ENCODE measurements at regions of chr16 and their contacts with region 1.

Region 1: GRCh38 chr16:68902008-68902968 is 59.0 kb downstream of the TANGO6 start:
- DNase-seq: peak; percentile 48
- ATAC-seq: peak; percentile 71
- H3K4me3 ChIP-seq: no peak overlapping the region
- H3K27ac ChIP-seq: no peak overlapping the region
- H3K4me1 ChIP-seq: no peaks in the 10 kb centered on the region
- H3K27me3 ChIP-seq: no peaks in the 10 kb centered on the region
- CTCF ChIP-seq: peak; percentile 70

Region 2: GRCh38 chr16:68535331-68535730 is 367.0 kb before region 1 on chr16:
- CTCF ChIA-PET with region 1: interaction called, 3 read pairs
- POLR2A ChIA-PET with region 1: interaction called, 11 read pairs
- in situ Hi-C with region 1: no loop called
- intact Hi-C with region 1: no loop called
- DNase-seq: no peak
- ATAC-seq: no peak
- H3K4me3 ChIP-seq: no peak overlapping the region
- H3K27ac ChIP-seq: no peak overlapping the region
- H3K4me1 ChIP-seq: no peaks in the 10 kb centered on the region; the same call in 1 of the 2 replicates
- H3K27me3 ChIP-seq: no peaks in the 10 kb centered on the region
- CTCF ChIP-seq: no peak

Region 3: DNA sequence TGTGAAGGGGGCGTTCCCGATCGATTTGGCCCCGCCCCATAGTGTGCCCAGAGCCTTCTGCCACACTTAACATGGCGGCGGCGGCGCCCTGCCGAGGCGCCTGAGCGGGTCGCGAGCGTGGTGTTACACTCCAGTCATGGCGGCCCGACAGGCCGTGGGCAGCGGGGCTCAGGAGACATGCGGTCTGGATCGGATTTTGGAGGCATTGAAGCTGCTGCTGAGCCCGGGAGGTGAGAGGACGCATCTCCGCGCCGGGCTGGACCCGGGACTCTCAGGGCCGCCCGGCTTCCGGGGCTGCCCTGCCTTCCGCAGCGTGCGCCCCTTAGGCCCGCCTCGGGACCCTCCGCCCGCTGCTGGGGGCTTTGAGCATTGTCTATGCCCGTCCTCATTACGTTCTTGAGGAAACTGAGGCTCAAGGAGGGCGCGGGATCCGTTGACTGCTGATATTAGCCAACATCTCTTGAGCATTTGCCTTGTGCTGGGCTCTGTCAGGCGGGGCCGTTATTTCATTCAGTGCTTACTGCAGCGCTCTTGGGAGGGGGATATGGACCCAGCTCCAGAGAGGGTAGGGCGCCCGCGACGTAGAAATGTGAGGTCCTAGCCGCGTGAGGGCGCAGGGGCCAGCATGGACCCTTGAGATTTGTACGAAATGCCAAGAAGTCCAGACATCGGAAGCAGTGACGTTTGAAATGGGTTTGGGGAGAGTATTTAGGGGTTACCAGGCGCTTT is 58.6 kb before region 1 on chr16 and contains the start of gene TANGO6:
- CTCF ChIA-PET with region 1: interaction called, 17 read pairs
- POLR2A ChIA-PET with region 1: interaction called, 6 read pairs
- in situ Hi-C with region 1: no loop called
- intact Hi-C with region 1: no loop called
- DNase-seq: peak; percentile 12
- ATAC-seq: peak; percentile 97
- H3K4me3 ChIP-seq: peak within 1 kb of the TSS; percentile 83 to 87
- H3K27ac ChIP-seq: peak within 1 kb of the TSS; percentile 90
- H3K4me1 ChIP-seq: peaks cover 4% of the 10 kb centered on the region
- H3K27me3 ChIP-seq: no peaks in the 10 kb centered on the region
- CTCF ChIP-seq: no peak; the same call in 1 of the 2 replicates
- total RNA-seq, gene TANGO6: 11.0 TPM

Region 4: DNA sequence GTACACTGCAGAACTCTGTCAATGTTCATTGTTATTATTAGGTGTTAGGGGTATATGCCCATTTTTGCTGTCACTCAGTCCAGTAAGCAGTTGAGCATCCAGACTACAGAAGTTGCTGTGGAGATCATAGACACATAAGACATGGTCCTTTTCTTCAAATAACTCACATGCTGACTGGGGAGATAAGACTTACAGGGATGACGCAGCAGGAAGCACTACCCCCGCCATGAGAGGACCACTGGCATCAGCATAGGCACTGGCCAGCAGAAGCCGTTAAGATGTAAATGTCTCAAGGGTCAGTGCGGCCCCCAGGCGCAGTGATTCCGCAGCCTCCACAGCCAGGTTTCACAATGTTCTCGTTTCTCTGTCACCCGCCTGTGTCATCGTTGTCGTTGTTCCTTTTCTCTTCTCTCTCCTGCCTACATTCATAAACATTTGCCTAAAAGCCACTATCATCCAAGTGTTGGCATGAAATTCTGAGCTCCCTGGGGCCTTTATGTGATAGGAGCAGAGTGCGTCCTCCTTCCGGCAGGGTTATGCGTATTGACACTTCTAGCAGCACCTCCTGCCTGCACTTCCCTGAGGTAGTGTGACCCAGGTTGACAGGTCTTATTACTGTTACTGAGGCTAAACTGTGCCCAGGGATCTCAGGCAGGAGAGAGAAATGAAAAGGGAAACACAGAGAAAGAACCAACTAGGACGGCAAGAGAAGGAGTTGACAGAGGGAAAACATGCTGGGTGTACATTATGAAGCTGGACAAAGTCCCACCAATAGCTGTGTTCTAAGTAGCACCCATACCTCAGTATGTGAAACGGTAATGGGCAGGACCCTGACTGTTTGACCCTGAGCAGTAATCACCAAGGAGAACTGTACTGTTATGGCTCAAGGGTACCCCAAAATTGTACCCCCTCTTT is 41.1 kb before region 1 on chr16:
- CTCF ChIA-PET with region 1: no interaction called
- POLR2A ChIA-PET with region 1: no interaction called
- in situ Hi-C with region 1: no loop called
- intact Hi-C with region 1: no loop called
- DNase-seq: no peak
- ATAC-seq: no peak
- H3K4me3 ChIP-seq: no peak overlapping the region
- H3K27ac ChIP-seq: no peak overlapping the region
- H3K4me1 ChIP-seq: no peaks in the 10 kb centered on the region
- H3K27me3 ChIP-seq: no peaks in the 10 kb centered on the region
- CTCF ChIP-seq: no peak

Region 5: DNA sequence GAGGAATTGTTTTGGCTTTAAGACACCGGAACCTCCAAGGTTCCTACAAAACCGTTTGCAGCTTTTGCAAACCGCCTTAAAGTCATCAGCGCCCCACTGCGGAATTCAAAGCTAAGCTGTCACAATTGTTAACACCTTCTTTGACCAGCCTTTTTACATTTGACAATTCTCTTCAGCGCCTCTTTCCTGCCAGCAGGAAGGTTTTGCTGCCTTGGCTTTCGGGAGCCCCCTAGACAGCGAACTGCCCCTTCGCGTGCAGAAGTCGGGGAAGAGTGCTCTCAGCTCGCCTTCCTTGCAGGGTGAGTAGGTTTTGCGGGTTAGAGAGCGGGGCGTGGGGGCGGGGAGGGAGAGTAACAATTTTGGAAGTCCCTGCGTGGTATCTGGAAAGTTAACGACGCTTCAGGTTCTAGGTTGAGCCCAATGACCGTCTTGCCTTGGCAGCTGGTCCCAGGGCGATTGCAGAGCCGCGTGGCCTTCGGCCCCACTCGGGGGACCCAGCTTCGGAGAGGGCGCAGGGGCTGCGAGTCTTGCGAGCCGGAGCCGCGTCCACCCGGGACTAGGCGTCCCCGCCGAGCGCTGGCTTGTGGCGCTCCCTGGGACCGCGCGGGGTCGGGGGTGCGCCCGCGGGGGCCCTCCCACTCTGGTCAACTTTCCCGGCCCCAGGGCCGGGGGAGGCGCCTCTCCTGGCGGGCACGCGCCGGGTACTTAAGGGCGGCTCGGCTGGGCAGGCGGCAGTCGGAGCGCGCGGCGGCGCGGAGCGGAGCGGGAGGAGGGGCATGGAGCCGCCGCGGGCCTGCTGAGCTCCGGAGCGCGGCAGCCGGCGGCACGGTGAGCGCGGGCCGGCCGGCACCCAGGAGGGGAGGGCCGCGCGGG is 203.4 kb after region 1 on chr16 and contains the start of gene HAS3:
- CTCF ChIA-PET with region 1: no interaction called
- POLR2A ChIA-PET with region 1: no interaction called
- in situ Hi-C with region 1: no loop called
- intact Hi-C with region 1: loop called (anchors 5 kb)
- DNase-seq: peak; percentile 42
- ATAC-seq: peak; percentile 85
- H3K4me3 ChIP-seq: peak within 1 kb of the TSS; percentile 58 to 64
- H3K27ac ChIP-seq: 0 out of 2 replicates have a peak within 1 kb of the TSS, but pooled peaks have one; percentile 39
- H3K4me1 ChIP-seq: peaks cover 17% of the 10 kb centered on the region
- H3K27me3 ChIP-seq: no peaks in the 10 kb centered on the region
- CTCF ChIP-seq: peak; percentile 72; the same call in 1 of the 2 replicates
- total RNA-seq, gene HAS3: 6.9 TPM

Region 6: GRCh38 chr16:69171325-69172084 is 269.2 kb after region 1 on chr16:
- CTCF ChIA-PET with region 1: interaction called, 11 read pairs
- POLR2A ChIA-PET with region 1: no interaction called
- in situ Hi-C with region 1: no loop called
- intact Hi-C with region 1: no loop called
- DNase-seq: no peak
- ATAC-seq: no peak
- H3K4me3 ChIP-seq: no peak overlapping the region
- H3K27ac ChIP-seq: no peak overlapping the region
- H3K4me1 ChIP-seq: peaks cover 8% of the 10 kb centered on the region; the same call in 1 of the 2 replicates
- H3K27me3 ChIP-seq: no peaks in the 10 kb centered on the region
- CTCF ChIP-seq: no peak